Common myeloid progenitor, CD34-positive (primary cell): ENCODE measurements at regions of chr5 and their contacts with region 1.

Region 1: GRCh38 chr5:146662229-146662628 is 146.2 kb upstream of the GPR151 start:
- DNase-seq: peak; percentile 31 to 63 (median 62)
- H3K4me3 ChIP-seq: no peak overlapping the region
- H3K27ac ChIP-seq: no peak overlapping the region
- H3K4me1 ChIP-seq: no peaks in the 10 kb centered on the region
- H3K27me3 ChIP-seq: peaks cover 0 to 2% (median 0%) of the 10 kb centered on the region in 5 experiments

Region 2: GRCh38 chr5:146675636-146676035 is 13.4 kb after region 1 on chr5:
- CTCF ChIA-PET with region 1: interaction called, 11 read pairs
- POLR2A ChIA-PET with region 1: no interaction called
- DNase-seq: peak in 2 of 3 donors; percentile 44 to 62
- H3K4me3 ChIP-seq: peak overlapping the region in 3 of 7 experiments; percentile 13 to 17 (median 14)
- H3K27ac ChIP-seq: no peak overlapping the region
- H3K4me1 ChIP-seq: peaks cover 2 to 24% (median 11%) of the 10 kb centered on the region in 4 experiments
- H3K27me3 ChIP-seq: no peaks in the 10 kb centered on the region